AG04449 (cell line): ENCODE measurements at regions of chr7 and their contacts with region 1.

Region 1: GRCh38 chr7:28955718-28956619 is 2.2 kb downstream of the TRIL start:
- DNase-seq: no peak
- H3K4me3 ChIP-seq: peak overlapping the region; percentile 56
- CTCF ChIP-seq: peak; percentile 67

Region 2: DNA sequence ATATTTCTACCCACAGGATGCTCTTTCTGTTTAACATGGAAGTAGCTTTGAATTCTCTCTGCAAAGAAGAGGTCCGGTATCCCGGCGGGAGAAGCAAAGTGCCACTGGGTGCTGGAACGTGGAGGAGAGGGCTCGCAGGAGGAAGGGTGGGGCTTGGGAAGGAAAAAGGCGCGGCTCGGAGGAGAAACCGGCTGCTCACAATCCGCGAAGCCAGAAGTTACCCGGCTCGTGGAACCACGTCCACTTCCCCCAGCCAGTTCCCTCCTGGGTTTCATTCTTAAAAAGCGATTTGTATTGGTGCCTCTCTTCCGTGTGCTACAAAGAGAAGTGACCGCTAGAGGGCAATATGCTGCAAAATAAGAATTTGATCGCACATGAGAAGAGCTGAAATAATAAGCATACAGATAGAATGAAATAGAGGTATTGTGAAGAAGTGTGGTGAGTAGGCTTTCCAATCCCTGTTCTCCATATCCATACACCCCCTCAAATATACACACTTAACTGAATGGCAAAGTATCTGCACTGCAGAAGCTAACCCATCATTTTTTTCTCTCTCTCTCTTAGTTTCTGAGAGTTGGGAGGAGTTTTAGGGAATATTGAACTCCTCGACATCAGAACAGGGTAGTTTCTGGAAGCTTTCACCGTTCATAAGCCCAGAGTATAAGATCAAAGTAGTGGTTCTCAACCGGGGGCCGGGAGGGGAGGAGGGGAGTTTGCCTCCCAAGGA is 28.9 kb before region 1 on chr7:
- CTCF ChIA-PET with region 1: interaction called, 767 read pairs
- POLR2A ChIA-PET with region 1: no interaction called
- DNase-seq: peak; percentile 60
- H3K4me3 ChIP-seq: peak overlapping the region; percentile 72
- CTCF ChIP-seq: peak; percentile 64

Region 3: GRCh38 chr7:28984631-28985030 is 28.7 kb after region 1 on chr7:
- CTCF ChIA-PET with region 1: interaction called, 50 read pairs
- POLR2A ChIA-PET with region 1: interaction called, 3 read pairs
- DNase-seq: peak; percentile 62
- H3K4me3 ChIP-seq: no peak overlapping the region
- CTCF ChIP-seq: no peak

Region 4: DNA sequence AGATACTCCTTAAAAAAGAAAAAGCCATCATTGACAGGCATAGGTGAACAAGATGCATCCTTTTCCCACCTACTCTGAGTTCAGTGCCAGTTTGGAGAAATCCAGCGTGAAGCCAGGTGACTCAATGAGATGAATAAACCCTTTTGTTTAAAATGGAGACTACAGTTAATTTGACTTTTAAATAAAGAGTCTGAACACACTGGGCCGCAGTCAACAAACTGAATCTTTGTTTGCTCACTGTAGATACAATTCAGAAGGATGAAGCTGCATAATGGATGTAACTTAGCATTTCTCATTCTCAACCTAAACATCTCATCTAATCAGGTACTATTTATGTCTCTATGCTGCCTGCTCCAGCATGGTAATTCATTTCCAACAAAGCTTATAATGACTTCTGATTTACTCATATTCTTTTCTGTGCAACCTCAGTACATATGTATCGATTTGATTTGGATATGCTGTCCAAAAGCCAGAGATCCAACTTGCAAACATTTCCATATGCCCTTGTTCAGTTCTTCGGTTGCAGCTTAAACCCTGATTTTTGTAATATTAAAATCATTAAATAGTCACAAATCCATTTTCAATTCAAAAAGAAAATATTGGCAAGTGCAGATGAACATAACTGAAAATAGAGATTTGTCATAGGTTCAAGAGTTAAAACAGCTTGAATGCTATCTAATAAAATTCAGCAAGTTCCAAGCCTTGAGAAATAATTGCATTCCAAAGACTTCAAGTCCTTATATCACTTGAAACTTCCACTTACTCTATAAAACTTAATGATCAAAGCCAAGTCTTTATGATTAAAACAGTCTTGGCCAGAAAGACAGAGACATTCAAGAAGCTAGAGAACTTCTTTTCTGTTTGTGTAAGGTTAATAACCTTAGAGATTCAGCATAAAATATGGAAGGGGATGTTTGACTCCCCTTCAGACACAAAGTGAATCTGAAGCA is 122.6 kb after region 1 on chr7:
- CTCF ChIA-PET with region 1: interaction called, 10 read pairs
- POLR2A ChIA-PET with region 1: no interaction called
- DNase-seq: no peak
- H3K4me3 ChIP-seq: no peak overlapping the region
- CTCF ChIP-seq: no peak

Region 5: DNA sequence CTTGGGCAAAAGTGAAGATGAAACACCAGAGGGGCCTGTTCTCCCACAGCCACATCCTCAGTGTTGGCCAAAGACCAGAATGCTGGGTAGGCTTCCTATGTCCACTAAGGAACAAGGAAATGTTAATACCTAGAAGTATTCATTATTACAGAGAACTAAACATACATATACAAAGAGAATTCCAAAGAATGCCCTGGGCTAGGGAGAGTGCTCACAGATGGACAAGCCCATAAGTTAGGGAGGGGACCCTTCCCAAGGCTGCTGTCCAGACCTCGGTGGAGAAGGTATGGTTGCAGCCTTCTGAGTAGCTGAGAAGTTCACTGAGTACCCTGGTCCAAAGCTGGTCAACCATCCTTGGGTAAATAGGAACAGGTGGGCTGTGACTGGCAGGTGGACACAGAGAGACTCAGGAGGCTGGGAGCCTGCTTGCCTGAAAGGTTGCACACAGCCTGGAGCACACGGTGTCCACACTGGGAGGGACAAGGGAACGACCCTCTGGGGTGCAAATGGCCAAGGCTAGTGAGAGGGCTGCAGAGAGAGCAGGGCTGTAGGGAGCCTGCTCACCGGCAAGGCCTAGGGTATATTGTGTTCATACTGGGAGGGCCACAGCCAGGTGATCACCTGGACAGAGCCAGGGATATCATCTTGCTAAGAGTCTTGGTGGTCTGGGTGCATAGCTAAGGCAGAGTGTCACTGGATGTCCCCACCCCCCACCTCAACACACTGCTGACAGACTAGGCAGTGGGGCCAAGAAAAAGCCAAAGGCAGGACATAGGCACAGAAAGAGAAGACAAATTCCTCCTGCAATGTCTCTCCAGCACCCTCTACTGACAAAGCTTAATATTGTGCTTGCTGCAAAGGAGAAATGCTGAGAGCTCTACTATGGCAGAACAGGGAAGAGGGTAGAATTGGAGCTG is 150.0 kb after region 1 on chr7:
- CTCF ChIA-PET with region 1: interaction called, 92 read pairs
- POLR2A ChIA-PET with region 1: interaction called, 3 read pairs
- DNase-seq: no peak
- H3K4me3 ChIP-seq: no peak overlapping the region
- CTCF ChIP-seq: peak; percentile 81

Region 6: GRCh38 chr7:29408841-29409243 is 452.9 kb after region 1 on chr7:
- CTCF ChIA-PET with region 1: interaction called, 10 read pairs
- POLR2A ChIA-PET with region 1: no interaction called
- DNase-seq: peak; percentile 9
- H3K4me3 ChIP-seq: no peak overlapping the region
- CTCF ChIP-seq: peak; percentile 67